ENCODE measurements at regions of chr7 and their contacts with region 1.

Region 1: DNA sequence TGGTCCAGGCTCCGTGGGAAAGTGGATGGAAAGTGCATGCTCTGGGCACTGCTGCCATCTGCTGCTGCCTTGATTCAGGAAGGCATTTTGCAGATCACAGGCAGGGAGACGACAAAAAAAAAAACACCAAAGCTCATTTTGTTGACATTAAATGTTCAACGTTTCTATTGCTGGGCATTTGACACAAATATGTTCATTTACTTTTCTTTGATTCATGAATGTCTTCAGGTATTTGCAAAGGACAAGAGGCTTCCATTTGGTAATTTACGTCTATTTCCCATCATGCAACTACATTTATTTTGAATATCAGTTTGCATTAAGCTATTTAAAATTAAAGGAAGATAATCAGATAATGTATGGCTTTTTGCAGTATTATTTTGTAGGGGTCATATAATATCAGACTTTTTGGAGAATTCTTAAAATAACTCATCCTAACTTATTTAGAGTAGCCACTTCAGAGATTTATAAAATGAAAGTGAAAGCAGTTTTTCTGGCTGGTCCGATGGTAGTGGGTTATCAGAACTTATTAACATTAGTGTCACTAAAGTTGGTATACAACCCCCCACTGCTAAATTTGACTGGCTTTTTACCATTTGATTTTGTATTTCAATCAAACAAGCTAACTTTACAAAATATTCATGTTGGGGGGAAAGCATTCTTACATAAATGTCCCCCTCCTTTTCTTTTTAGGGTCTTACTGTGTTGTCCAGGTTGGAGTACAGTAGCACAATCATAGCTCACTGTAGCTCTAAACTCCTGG is 65.3 kb downstream of the PDIA4 start:
- DNase-seq: peak; percentile 83
- H3K4me3 ChIP-seq: peak overlapping the region; percentile 48 to 75 (median 58)
- H3K27ac ChIP-seq: peak overlapping the region; percentile 76 to 85 (median 80)
- H3K4me1 ChIP-seq: peaks cover 6 to 41% (median 32%) of the 10 kb centered on the region in 6 donors
- H3K27me3 ChIP-seq: no peaks in the 10 kb centered on the region
- CTCF ChIP-seq: peak; percentile 52 to 88 (median 66)
- POLR2A ChIP-seq: no peak

Region 2: GRCh38 chr7:148503875-148504487 is 459.0 kb before region 1 on chr7:
- intact Hi-C with region 1: loop called (anchors 5 kb)
- DNase-seq: no peak
- H3K4me3 ChIP-seq: no peak overlapping the region
- H3K27ac ChIP-seq: no peak overlapping the region
- H3K4me1 ChIP-seq: peaks cover 0 to 7% (median 0%) of the 10 kb centered on the region in 6 donors
- H3K27me3 ChIP-seq: peaks cover 0 to 4% (median 0%) of the 10 kb centered on the region in 7 donors
- CTCF ChIP-seq: peak; percentile 53 to 86 (median 70)
- POLR2A ChIP-seq: no peak

Region 3: GRCh38 chr7:148575640-148576411 is 387.2 kb before region 1 on chr7:
- intact Hi-C with region 1: loop called (anchors 5 kb)
- DNase-seq: peak; percentile 85
- H3K4me3 ChIP-seq: no peak overlapping the region
- H3K27ac ChIP-seq: no peak overlapping the region
- H3K4me1 ChIP-seq: peaks cover 0 to 10% (median 4%) of the 10 kb centered on the region in 6 donors
- H3K27me3 ChIP-seq: no peaks in the 10 kb centered on the region
- CTCF ChIP-seq: peak; percentile 63 to 88 (median 79)
- POLR2A ChIP-seq: no peak

Region 4: GRCh38 chr7:148856891-148857290 is 106.1 kb before region 1 on chr7:
- intact Hi-C with region 1: loop called (anchors 5 kb)
- DNase-seq: no peak
- H3K4me3 ChIP-seq: no peak overlapping the region
- H3K27ac ChIP-seq: no peak overlapping the region
- H3K4me1 ChIP-seq: peaks cover 0 to 14% (median 4%) of the 10 kb centered on the region in 6 donors
- H3K27me3 ChIP-seq: no peaks in the 10 kb centered on the region
- CTCF ChIP-seq: no peak
- POLR2A ChIP-seq: no peak

Region 5: GRCh38 chr7:149266461-149266860 is 303.5 kb after region 1 on chr7:
- intact Hi-C with region 1: no loop called
- DNase-seq: no peak
- H3K4me3 ChIP-seq: no peak overlapping the region
- H3K27ac ChIP-seq: no peak overlapping the region
- H3K4me1 ChIP-seq: peaks cover 9 to 33% (median 25%) of the 10 kb centered on the region in 6 donors
- H3K27me3 ChIP-seq: no peaks in the 10 kb centered on the region
- CTCF ChIP-seq: no peak
- POLR2A ChIP-seq: no peak